ENCODE measurements at regions of chr5 and their contacts with region 1.

Region 1: GRCh38 chr5:126776497-126777256 is at the start of gene LMNB1:
- DNase-seq: peak; percentile 92 to 98 (median 94)
- H3K4me3 ChIP-seq: peak within 1 kb of the TSS; percentile 78 to 94
- H3K4me3 Mint-ChIP-seq: peak within 1 kb of the TSS; percentile 88 to 98 (median 95)
- H3K27ac ChIP-seq: peak within 1 kb of the TSS; percentile 85
- H3K27ac Mint-ChIP-seq: peak within 1 kb of the TSS; percentile 86 to 99 (median 95)
- H3K4me1 ChIP-seq: peaks cover 37% of the 10 kb centered on the region
- H3K4me1 Mint-ChIP-seq: peaks cover 16 to 35% (median 25%) of the 10 kb centered on the region in 4 donors
- H3K27me3 ChIP-seq: no peaks in the 10 kb centered on the region
- H3K27me3 Mint-ChIP-seq: no peaks in the 10 kb centered on the region
- total RNA-seq, gene LMNB1: 28.2 to 32.3 TPM

Region 2: DNA sequence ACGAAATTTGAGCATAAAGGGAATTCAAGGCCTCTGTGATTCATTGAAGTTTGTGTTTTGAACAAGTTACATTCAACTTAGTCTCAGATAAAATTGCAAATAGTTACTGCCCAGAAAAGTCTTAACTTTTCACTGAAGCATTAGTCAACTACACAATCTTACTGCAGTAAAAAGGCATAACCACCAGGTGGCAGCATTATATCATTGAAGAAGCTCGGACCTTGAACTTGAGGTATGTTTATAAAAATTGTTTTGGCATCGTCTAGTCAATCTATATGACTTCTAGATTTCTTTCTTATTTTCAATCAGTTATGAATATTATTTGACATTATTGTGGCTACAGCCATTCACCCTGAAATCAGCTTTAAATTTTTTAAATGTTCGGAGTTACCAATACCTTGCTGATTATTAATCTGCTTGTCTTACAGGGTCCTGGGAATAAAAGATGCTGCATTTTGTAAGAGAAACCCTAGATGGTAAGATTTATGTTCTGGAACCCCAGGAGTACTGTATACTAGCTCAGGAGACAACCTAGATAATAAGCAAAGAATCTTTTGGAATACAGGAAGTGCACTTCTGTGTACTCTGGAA is 437.4 kb before region 1 on chr5:
- CTCF ChIA-PET with region 1: interaction called, 3 read pairs
- POLR2A ChIA-PET with region 1: no interaction called
- intact Hi-C with region 1: loop called (anchors 5 kb)
- DNase-seq: peak; percentile 56 to 66 (median 58)
- H3K4me3 ChIP-seq: no peak overlapping the region
- H3K4me3 Mint-ChIP-seq: no peak overlapping the region
- H3K27ac ChIP-seq: no peak overlapping the region
- H3K27ac Mint-ChIP-seq: no peak overlapping the region
- H3K4me1 ChIP-seq: no peaks in the 10 kb centered on the region
- H3K4me1 Mint-ChIP-seq: no peaks in the 10 kb centered on the region
- H3K27me3 ChIP-seq: no peaks in the 10 kb centered on the region
- H3K27me3 Mint-ChIP-seq: peaks cover 9 to 21% of the 10 kb centered on the region in 2 donors

Region 3: GRCh38 chr5:126656396-126657007 is 120.2 kb before region 1 on chr5:
- CTCF ChIA-PET with region 1: interaction called, 39 read pairs
- POLR2A ChIA-PET with region 1: no interaction called
- intact Hi-C with region 1: loop called (anchors 1 kb)
- DNase-seq: peak in 4 of 5 donors; percentile 22 to 31 (median 26)
- H3K4me3 ChIP-seq: no peak overlapping the region
- H3K4me3 Mint-ChIP-seq: no peak overlapping the region
- H3K27ac ChIP-seq: no peak overlapping the region
- H3K27ac Mint-ChIP-seq: peak overlapping the region in 2 of 7 donors; percentile 1 to 53
- H3K4me1 ChIP-seq: no peaks in the 10 kb centered on the region
- H3K4me1 Mint-ChIP-seq: no peaks in the 10 kb centered on the region
- H3K27me3 ChIP-seq: peaks cover 4% of the 10 kb centered on the region
- H3K27me3 Mint-ChIP-seq: peaks cover 1 to 2% of the 10 kb centered on the region in 2 donors

Region 4: GRCh38 chr5:126753227-126753626 is 23.4 kb before region 1 on chr5:
- CTCF ChIA-PET with region 1: interaction called, 48 read pairs
- POLR2A ChIA-PET with region 1: interaction called, 52 read pairs
- intact Hi-C with region 1: loop called (anchors 1 kb)
- DNase-seq: no peak
- H3K4me3 ChIP-seq: no peak overlapping the region
- H3K4me3 Mint-ChIP-seq: no peak overlapping the region
- H3K27ac ChIP-seq: no peak overlapping the region
- H3K27ac Mint-ChIP-seq: no peak overlapping the region
- H3K4me1 ChIP-seq: peaks cover 13% of the 10 kb centered on the region
- H3K4me1 Mint-ChIP-seq: peaks cover 6 to 21% (median 9%) of the 10 kb centered on the region in 4 donors
- H3K27me3 ChIP-seq: no peaks in the 10 kb centered on the region
- H3K27me3 Mint-ChIP-seq: no peaks in the 10 kb centered on the region

Region 5: GRCh38 chr5:126808521-126808988 is 31.9 kb after region 1 on chr5:
- CTCF ChIA-PET with region 1: interaction called, 93 read pairs
- POLR2A ChIA-PET with region 1: interaction called, 42 read pairs
- intact Hi-C with region 1: loop called (anchors 5 kb)
- DNase-seq: peak in 4 of 5 donors; percentile 21 to 40 (median 30)
- H3K4me3 ChIP-seq: no peak overlapping the region
- H3K4me3 Mint-ChIP-seq: no peak overlapping the region
- H3K27ac ChIP-seq: no peak overlapping the region
- H3K27ac Mint-ChIP-seq: peak overlapping the region in 2 of 7 donors; percentile 1 to 33
- H3K4me1 ChIP-seq: peaks cover 25% of the 10 kb centered on the region
- H3K4me1 Mint-ChIP-seq: peaks cover 27 to 36% (median 30%) of the 10 kb centered on the region in 4 donors
- H3K27me3 ChIP-seq: no peaks in the 10 kb centered on the region
- H3K27me3 Mint-ChIP-seq: no peaks in the 10 kb centered on the region

Region 6: DNA sequence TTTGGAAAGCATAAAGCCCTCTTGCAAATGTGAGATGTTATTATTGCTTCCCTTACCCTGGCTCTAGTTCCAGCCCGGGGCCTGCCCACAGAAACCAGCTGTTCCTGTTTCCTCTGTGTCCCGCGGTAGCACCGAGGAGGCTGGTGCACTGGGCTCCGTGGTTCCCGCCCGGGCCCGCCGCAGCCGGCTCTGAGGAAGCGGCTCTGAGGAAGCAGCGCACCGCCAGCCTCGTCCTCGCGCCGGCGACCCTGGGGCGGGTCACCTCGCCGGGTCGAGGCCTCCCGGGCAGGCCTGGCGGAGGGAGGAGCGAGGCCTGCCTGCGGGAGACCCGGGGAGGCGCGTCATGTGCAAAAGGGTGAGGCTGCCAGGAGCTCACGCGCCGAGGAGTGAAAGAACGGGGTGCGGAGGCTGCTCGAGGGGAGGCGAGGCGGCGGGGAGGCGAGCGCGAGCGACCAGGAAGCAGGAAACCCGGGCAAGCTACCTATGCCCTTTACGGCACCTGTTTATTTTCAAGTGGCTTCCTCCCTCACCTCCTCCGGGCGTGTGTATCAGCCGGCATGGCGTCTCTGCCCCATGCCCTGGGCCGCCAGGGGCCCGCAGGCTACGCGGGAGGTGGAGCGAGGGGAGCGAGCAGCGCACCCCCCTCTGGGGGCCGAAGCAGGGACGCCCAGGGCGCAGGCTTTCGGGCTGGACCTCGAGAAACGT is 452.7 kb after region 1 on chr5:
- CTCF ChIA-PET with region 1: no interaction called
- POLR2A ChIA-PET with region 1: interaction called, 25 read pairs
- intact Hi-C with region 1: loop called (anchors 1 kb)
- DNase-seq: peak; percentile 54 to 64 (median 59)
- H3K4me3 ChIP-seq: peak overlapping the region in 1 of 2 donors; percentile 78
- H3K4me3 Mint-ChIP-seq: peak overlapping the region; percentile 55 to 88 (median 80)
- H3K27ac ChIP-seq: peak overlapping the region; percentile 45
- H3K27ac Mint-ChIP-seq: peak overlapping the region; percentile 45 to 87 (median 82)
- H3K4me1 ChIP-seq: peaks cover 16% of the 10 kb centered on the region
- H3K4me1 Mint-ChIP-seq: peaks cover 15 to 24% (median 18%) of the 10 kb centered on the region in 4 donors
- H3K27me3 ChIP-seq: no peaks in the 10 kb centered on the region
- H3K27me3 Mint-ChIP-seq: no peaks in the 10 kb centered on the region

Region 7: GRCh38 chr5:128083033-128083810 is 1306.5 kb after region 1 on chr5 and contains the start of gene SLC12A2:
- CTCF ChIA-PET with region 1: no interaction called
- POLR2A ChIA-PET with region 1: interaction called, 6 read pairs
- intact Hi-C with region 1: loop called (anchors 1 kb)
- DNase-seq: peak; percentile 94 to 98 (median 97)
- H3K4me3 ChIP-seq: peak within 1 kb of the TSS; percentile 68 to 89
- H3K4me3 Mint-ChIP-seq: peak within 1 kb of the TSS; percentile 89 to 98 (median 94)
- H3K27ac ChIP-seq: peak within 1 kb of the TSS; percentile 88
- H3K27ac Mint-ChIP-seq: peak within 1 kb of the TSS; percentile 87 to 98 (median 97)
- H3K4me1 ChIP-seq: peaks cover 62% of the 10 kb centered on the region
- H3K4me1 Mint-ChIP-seq: peaks cover 51 to 76% (median 61%) of the 10 kb centered on the region in 4 donors
- H3K27me3 ChIP-seq: no peaks in the 10 kb centered on the region
- H3K27me3 Mint-ChIP-seq: no peaks in the 10 kb centered on the region
- total RNA-seq, gene SLC12A2: 13.3 to 13.6 TPM